ENCODE measurements at regions of chrX and their contacts with region 1.

Region 1: GRCh38 chrX:119004920-119005524 is 30.6 kb downstream of the LONRF3 start:
- DNase-seq: peak; percentile 54
- ATAC-seq: peak; percentile 80
- H3K4me3 Mint-ChIP-seq: no peak overlapping the region
- H3K27ac Mint-ChIP-seq: no peak overlapping the region
- H3K4me1 Mint-ChIP-seq: no peaks in the 10 kb centered on the region
- H3K27me3 Mint-ChIP-seq: no peaks in the 10 kb centered on the region
- CTCF ChIP-seq: peak; percentile 64

Region 2: DNA sequence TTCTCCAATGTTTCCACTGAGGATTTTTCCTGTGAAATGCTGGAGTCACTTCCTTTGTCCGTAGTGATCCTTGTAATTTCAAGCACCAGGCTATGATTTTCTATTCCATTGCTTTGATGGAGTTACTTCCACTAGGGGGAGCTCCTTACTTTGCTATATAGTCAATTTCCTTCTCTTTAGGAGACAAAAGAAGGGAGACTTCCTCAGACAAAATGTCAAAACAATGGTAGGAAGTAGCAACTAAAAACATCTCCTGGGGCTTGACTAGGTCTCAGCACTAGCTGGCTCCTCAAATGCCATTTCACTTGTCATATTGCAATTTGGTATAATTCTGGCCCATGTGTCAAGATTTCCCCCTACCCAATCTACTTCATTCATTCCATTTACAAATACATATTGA is 157.3 kb before region 1 on chrX:
- CTCF ChIA-PET with region 1: interaction called, 8 read pairs
- POLR2A ChIA-PET with region 1: no interaction called
- intact Hi-C with region 1: loop called (anchors 2 kb)
- DNase-seq: no peak
- ATAC-seq: peak; percentile 47
- H3K4me3 Mint-ChIP-seq: no peak overlapping the region
- H3K27ac Mint-ChIP-seq: no peak overlapping the region
- H3K4me1 Mint-ChIP-seq: no peaks in the 10 kb centered on the region
- H3K27me3 Mint-ChIP-seq: no peaks in the 10 kb centered on the region
- CTCF ChIP-seq: peak; percentile 49

Region 3: DNA sequence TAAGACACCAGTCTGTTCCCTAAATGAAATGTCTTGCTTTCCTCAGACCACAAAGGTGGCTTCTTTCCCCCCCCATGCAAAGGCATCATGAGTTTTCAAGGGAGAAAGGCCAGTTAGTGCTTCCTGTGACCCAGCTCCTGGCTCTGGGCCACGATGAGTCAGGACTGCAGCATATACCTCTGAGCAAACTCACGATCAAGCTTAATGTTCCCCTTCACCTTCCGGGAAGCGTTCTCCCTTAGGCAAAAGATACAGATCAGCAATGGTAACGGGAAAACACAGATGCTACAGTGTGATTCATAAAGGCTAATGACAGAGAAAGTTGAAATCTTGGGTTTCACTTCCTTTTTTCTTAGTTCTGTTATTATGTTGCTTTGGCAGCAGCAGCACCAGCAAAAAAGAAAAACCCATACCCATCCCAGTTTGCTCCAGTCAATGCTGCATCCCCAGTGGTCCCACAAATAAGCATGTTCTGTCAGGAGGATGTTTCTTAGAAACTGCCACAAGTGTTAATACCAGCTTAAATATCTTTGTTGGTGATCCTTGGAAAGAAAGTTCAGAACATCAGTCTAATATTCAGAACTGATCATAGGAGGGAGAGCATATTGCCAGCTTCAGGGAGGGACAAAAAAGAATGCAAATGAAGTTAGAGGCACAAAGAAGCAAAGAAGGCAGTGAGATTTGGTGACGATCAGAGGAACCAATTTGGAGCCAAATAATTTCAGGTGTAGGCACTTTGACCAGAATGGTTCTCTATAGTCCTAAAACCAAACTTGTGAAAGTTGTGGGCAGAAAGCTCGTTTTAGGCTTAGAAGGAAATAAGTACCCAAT is 10.6 kb after region 1 on chrX:
- CTCF ChIA-PET with region 1: interaction called, 18 read pairs
- POLR2A ChIA-PET with region 1: no interaction called
- intact Hi-C with region 1: no loop called
- DNase-seq: peak; percentile 58
- ATAC-seq: peak; percentile 84
- H3K4me3 Mint-ChIP-seq: no peak overlapping the region
- H3K27ac Mint-ChIP-seq: no peak overlapping the region
- H3K4me1 Mint-ChIP-seq: peaks cover 18% of the 10 kb centered on the region
- H3K27me3 Mint-ChIP-seq: no peaks in the 10 kb centered on the region
- CTCF ChIP-seq: no peak

Region 4: GRCh38 chrX:119067023-119067739 is 62.2 kb after region 1 on chrX:
- CTCF ChIA-PET with region 1: interaction called, 10 read pairs
- POLR2A ChIA-PET with region 1: no interaction called
- intact Hi-C with region 1: loop called (anchors 5 kb)
- DNase-seq: peak; percentile 60
- ATAC-seq: peak; percentile 87
- H3K4me3 Mint-ChIP-seq: no peak overlapping the region
- H3K27ac Mint-ChIP-seq: no peak overlapping the region
- H3K4me1 Mint-ChIP-seq: no peaks in the 10 kb centered on the region
- H3K27me3 Mint-ChIP-seq: no peaks in the 10 kb centered on the region
- CTCF ChIP-seq: peak; percentile 62

Measured in activated CD8-positive, alpha-beta T cell treated with anti-CD3 and anti-CD28 coated beads for 36 hours (primary cell).